Activated CD4-positive, alpha-beta T cell treated with anti-CD3 and anti-CD28 coated beads, Interleukin-2, amount 10 ng/mL, durations not matched to agents 24 days and 14 days (primary cell): ENCODE measurements at regions of chrX and their contacts with region 1.

Region 1: DNA sequence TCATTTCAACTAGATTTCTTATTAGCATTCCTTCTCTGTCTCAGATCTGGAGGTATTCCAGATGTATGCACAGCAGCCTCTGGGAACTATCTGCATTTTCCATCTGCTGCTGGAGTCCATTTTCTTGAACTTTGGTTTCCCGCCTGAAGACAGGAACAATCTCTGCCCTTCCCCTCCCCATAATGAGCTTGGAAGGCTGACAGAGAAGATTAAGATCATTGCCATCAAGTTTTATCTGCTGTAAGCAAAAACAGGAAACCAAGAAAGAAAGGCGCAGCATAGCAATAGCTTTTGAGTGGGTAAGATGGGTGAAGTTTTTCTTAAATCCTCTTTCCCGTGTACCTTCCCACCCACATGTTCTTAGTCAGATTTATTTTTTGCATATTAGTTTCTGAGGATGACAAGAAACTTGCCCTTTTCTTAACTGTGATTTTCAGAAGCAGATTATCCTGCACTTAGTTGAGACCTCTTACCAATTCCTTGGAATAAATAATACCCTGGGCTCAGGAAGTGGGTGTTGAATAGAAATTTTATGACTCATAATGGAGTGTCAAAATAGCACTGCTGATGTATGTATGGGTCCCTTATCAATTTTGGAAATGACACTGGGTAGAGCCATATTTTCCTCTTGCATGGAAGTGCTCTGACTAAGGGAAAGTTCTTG is 78.3 kb downstream of the CT47B1 start:
- DNase-seq: no peak
- H3K4me3 Mint-ChIP-seq: peak overlapping the region; percentile 55
- H3K27ac Mint-ChIP-seq: peak overlapping the region; percentile 94
- H3K4me1 Mint-ChIP-seq: peaks cover 35% of the 10 kb centered on the region
- H3K27me3 Mint-ChIP-seq: no peaks in the 10 kb centered on the region

Region 2: DNA sequence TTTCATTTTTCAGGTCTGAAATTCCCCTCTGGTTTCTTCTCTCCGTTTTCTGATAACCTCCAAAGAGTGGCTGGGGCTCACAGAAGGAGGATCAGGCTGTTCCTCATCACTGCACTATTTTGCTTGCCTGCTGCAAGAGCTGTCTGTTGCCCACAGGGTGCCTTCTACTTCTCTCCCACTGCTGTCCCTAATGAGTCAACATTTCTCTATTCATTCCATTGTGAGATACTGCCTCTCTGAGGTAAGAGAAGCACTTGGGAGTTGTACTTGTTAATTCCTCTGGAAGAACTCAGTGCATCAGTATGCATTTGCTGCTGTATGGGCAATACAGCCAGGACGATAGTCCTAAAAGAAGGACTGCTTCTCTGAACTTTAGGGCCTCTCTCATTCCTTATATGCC is 43.5 kb after region 1 on chrX:
- intact Hi-C with region 1: loop called (anchors 5 kb)
- DNase-seq: no peak
- H3K4me3 Mint-ChIP-seq: no peak overlapping the region
- H3K27ac Mint-ChIP-seq: no peak overlapping the region
- H3K4me1 Mint-ChIP-seq: no peaks in the 10 kb centered on the region
- H3K27me3 Mint-ChIP-seq: no peaks in the 10 kb centered on the region